Aorta (tissue), 5 donors: ENCODE measurements at regions of chr19 and their contacts with region 1.

Region 1: GRCh38 chr19:5048091-5048726 is 79.3 kb downstream of the KDM4B start:
- DNase-seq: peak; percentile 86 to 93
- ATAC-seq: peak; percentile 92
- H3K4me3 ChIP-seq: no peak overlapping the region
- H3K27ac ChIP-seq: no peak overlapping the region
- H3K4me1 ChIP-seq: no peaks in the 10 kb centered on the region
- H3K27me3 ChIP-seq: no peaks in the 10 kb centered on the region

Region 2: GRCh38 chr19:4968462-4969291 is 79.5 kb before region 1 on chr19 and contains the start of gene KDM4B:
- intact Hi-C with region 1: no loop called
- DNase-seq: peak; percentile 99 to 100
- ATAC-seq: peak; percentile 99
- H3K4me3 ChIP-seq: peak within 1 kb of the TSS; percentile 76 to 78
- H3K27ac ChIP-seq: no peak within 1 kb of the TSS
- H3K4me1 ChIP-seq: no peaks in the 10 kb centered on the region
- H3K27me3 ChIP-seq: no peaks in the 10 kb centered on the region
- total RNA-seq, gene KDM4B: 37.5 to 58.1 TPM

Region 3: DNA sequence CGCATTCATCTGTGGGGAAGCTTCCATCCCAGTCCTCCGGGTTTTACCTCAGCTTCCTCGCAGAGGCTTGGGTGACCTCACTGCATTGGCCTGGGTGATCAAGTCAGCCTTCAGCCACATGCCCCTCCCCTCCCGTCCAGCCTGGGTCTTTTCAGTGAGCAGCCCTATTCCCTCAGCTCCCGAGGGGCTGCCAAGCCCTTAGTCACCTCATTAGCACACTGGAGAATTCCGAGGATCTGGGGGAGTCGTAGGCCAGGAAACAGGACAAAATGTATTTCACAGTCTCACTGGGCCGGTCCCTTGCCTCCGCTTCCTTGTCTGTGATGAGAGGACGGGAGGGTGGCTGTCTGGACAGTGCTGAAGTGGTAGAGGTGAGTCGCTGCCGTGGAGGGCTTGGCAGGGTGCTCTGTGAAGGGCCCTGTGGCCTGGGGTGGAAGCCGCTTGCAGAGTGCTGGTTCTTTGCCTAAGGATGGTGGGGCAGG is 59.4 kb before region 1 on chr19:
- intact Hi-C with region 1: no loop called
- DNase-seq: peak; percentile 84 to 92
- ATAC-seq: peak; percentile 73
- H3K4me3 ChIP-seq: no peak overlapping the region
- H3K27ac ChIP-seq: no peak overlapping the region
- H3K4me1 ChIP-seq: no peaks in the 10 kb centered on the region
- H3K27me3 ChIP-seq: no peaks in the 10 kb centered on the region

Region 4: GRCh38 chr19:5001615-5002014 is 46.6 kb before region 1 on chr19:
- intact Hi-C with region 1: no loop called
- DNase-seq: no peak
- ATAC-seq: no peak
- H3K4me3 ChIP-seq: no peak overlapping the region
- H3K27ac ChIP-seq: no peak overlapping the region
- H3K4me1 ChIP-seq: no peaks in the 10 kb centered on the region
- H3K27me3 ChIP-seq: no peaks in the 10 kb centered on the region

Region 5: DNA sequence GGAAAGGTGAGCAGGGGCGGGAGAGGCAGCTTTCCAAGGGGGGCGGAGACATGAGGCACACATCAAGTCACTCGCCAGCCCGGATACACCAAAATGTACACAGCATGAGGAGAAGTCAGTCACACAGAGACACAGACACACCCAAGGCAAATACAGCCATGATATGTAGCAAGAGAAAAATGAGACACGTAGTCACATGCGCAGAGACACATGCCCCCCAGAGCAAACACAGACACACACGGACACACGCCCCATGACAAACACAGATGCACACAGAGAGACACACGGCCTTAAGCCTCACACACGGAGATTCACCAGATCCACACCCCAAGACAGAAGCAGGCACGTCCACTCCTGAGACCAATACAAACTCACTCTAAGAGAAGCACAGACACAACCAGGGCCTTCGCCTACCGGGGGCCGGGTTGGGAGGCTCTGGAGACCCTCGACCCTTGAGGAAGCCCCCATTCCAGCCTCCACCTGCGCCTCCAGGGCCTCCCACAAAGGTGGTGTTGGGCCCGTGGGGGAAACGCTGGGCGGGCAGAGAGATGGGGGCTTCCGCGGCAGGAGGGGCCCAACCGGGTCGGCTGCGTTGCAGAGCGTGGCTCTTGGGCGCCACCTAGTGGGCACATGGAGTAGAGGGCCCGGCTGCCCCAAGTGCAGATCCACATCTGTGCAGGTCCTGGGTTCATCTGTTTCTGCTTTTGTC is 529.7 kb after region 1 on chr19:
- intact Hi-C with region 1: loop called (anchors 1 to 5 kb)
- DNase-seq: peak; percentile 66 to 92
- ATAC-seq: peak; percentile 90
- H3K4me3 ChIP-seq: no peak overlapping the region
- H3K27ac ChIP-seq: no peak overlapping the region
- H3K4me1 ChIP-seq: no peaks in the 10 kb centered on the region
- H3K27me3 ChIP-seq: no peaks in the 10 kb centered on the region